T-cell (primary cell): ENCODE measurements at regions of chr3 and their contacts with region 1.

Region 1: GRCh38 chr3:99825004-99825640 is 7.5 kb downstream of the CMSS1 start:
- DNase-seq: no peak
- ATAC-seq: no peak
- H3K4me3 ChIP-seq: no peak overlapping the region
- H3K4me3 Mint-ChIP-seq: no peak overlapping the region
- H3K27ac ChIP-seq: no peak overlapping the region
- H3K27ac Mint-ChIP-seq: no peak overlapping the region
- H3K4me1 ChIP-seq: no peaks in the 10 kb centered on the region
- H3K4me1 Mint-ChIP-seq: peaks cover 22 to 27% (median 22%) of the 10 kb centered on the region in 3 donors
- H3K27me3 ChIP-seq: no peaks in the 10 kb centered on the region
- H3K27me3 Mint-ChIP-seq: no peaks in the 10 kb centered on the region

Region 2: GRCh38 chr3:98388147-98388546 is 1437.0 kb before region 1 on chr3:
- CTCF ChIA-PET with region 1: no interaction called
- POLR2A ChIA-PET with region 1: no interaction called
- DNase-seq: no peak
- ATAC-seq: no peak
- H3K4me3 ChIP-seq: no peak overlapping the region
- H3K4me3 Mint-ChIP-seq: no peak overlapping the region
- H3K27ac ChIP-seq: no peak overlapping the region
- H3K27ac Mint-ChIP-seq: no peak overlapping the region
- H3K4me1 ChIP-seq: no peaks in the 10 kb centered on the region
- H3K4me1 Mint-ChIP-seq: no peaks in the 10 kb centered on the region
- H3K27me3 ChIP-seq: no peaks in the 10 kb centered on the region
- H3K27me3 Mint-ChIP-seq: peaks cover 12 to 15% of the 10 kb centered on the region in 2 donors

Region 3: DNA sequence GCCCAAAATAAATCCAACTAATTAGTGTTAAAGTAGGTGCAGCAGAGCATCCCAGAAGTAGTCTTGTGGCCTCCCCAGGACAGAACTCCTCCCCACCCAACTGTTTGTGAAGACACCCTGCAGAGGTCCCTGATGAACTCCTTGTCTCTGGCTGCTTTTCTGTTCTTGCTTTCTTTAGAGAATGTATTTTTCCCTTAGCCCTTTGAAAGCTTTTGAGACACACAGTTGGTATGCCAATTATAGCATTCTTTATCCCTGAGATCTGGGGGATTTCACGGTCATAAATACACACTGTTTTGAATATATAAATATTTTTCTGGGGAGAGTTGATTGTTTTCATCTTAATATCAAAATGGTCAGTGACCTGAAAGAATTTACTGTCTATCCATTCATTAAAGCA is 894.0 kb after region 1 on chr3:
- CTCF ChIA-PET with region 1: no interaction called
- POLR2A ChIA-PET with region 1: interaction called in 1 of 2 experiments, 13 read pairs
- DNase-seq: no peak
- ATAC-seq: no peak
- H3K4me3 ChIP-seq: no peak overlapping the region
- H3K4me3 Mint-ChIP-seq: no peak overlapping the region
- H3K27ac ChIP-seq: no peak overlapping the region
- H3K27ac Mint-ChIP-seq: no peak overlapping the region
- H3K4me1 ChIP-seq: peaks cover 0 to 3% of the 10 kb centered on the region in 2 experiments
- H3K4me1 Mint-ChIP-seq: peaks cover 37 to 48% (median 45%) of the 10 kb centered on the region in 3 donors
- H3K27me3 ChIP-seq: no peaks in the 10 kb centered on the region
- H3K27me3 Mint-ChIP-seq: no peaks in the 10 kb centered on the region